Aorta (tissue), 5 donors: ENCODE measurements at regions of chr2 and their contacts with region 1.

Region 1: GRCh38 chr2:33210626-33211025 is 263.9 kb downstream of the LTBP1 start:
- DNase-seq: peak; percentile 82 to 84
- ATAC-seq: peak; percentile 78
- H3K4me3 ChIP-seq: no peak overlapping the region
- H3K27ac ChIP-seq: peak overlapping the region in 1 of 2 donors; percentile 37
- H3K4me1 ChIP-seq: peaks cover 12 to 21% of the 10 kb centered on the region in 2 donors
- H3K27me3 ChIP-seq: no peaks in the 10 kb centered on the region

Region 2: GRCh38 chr2:33145459-33145858 is 65.2 kb before region 1 on chr2:
- intact Hi-C with region 1: loop called in 1 of 2 experiments (anchors 5 kb)
- DNase-seq: no peak
- ATAC-seq: peak; percentile 56
- H3K4me3 ChIP-seq: no peak overlapping the region
- H3K27ac ChIP-seq: peak overlapping the region in 1 of 2 donors; percentile 93
- H3K4me1 ChIP-seq: peaks cover 9 to 16% of the 10 kb centered on the region in 2 donors
- H3K27me3 ChIP-seq: no peaks in the 10 kb centered on the region

Region 3: DNA sequence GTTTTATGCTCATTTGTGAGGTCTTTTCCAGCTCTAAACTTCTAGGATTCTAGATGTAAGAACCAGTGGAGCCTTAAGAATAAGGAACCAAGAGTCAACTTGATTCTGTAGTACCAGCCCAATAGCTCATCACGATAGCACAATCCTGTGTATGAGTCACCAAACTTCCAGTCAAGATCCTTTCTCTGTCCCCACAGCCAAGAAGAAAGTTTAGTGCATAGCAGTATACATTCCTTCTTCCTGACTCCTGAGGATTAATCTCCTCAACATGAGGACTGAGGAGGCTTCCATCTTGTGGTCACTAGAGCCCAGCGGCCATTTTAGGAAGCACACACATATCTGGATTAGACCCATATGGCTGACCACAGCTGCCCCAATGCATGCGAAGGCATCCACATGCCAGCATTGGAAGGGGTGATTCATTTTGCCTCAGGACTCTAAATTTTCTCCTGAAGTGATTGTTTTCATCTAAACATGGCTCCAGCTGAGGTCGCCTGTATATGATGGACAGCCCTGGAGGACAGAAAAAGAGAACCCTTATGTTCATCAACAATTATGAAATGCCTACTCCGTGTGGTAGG is 319.2 kb after region 1 on chr2:
- intact Hi-C with region 1: no loop called
- DNase-seq: no peak
- ATAC-seq: no peak
- H3K4me3 ChIP-seq: no peak overlapping the region
- H3K27ac ChIP-seq: peak overlapping the region in 1 of 2 donors; percentile 33
- H3K4me1 ChIP-seq: peaks cover 0 to 3% of the 10 kb centered on the region in 2 donors
- H3K27me3 ChIP-seq: no peaks in the 10 kb centered on the region